Activated CD8-positive, alpha-beta T cell treated with anti-CD3 and anti-CD28 coated beads, Interleukin-2, amount 10 ng/mL, durations not matched to agents 7 days and 5 days (primary cell): ENCODE measurements at regions of chr4 and their contacts with region 1.

Region 1: GRCh38 chr4:2220016-2220630 is 21.8 kb downstream of the HAUS3 start:
- DNase-seq: peak; percentile 85
- ATAC-seq: peak; percentile 90
- H3K4me3 Mint-ChIP-seq: no peak overlapping the region
- H3K27ac Mint-ChIP-seq: no peak overlapping the region
- H3K4me1 Mint-ChIP-seq: peaks cover 12% of the 10 kb centered on the region
- H3K27me3 Mint-ChIP-seq: no peaks in the 10 kb centered on the region

Region 2: DNA sequence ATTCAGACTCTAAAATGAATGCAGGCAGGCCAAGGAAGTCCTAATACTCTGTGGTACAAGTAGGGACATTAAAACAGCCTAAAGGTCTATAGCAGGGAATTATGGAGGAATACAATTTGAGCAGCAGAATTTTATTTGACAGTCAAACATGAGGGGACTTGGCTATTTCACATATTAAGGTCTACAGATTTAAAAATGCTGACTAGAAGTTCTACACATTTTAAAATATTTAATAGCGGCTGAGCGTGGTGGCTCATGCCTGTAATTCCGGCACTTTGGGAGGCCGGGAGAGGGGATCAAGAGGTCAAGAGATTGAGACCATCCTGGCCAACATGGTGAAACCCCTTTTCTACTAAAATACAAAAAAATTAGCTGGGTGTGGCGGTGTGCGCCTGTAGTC is 11.0 kb after region 1 on chr4:
- CTCF ChIA-PET with region 1: interaction called, 24 read pairs
- POLR2A ChIA-PET with region 1: no interaction called
- DNase-seq: no peak
- ATAC-seq: no peak
- H3K4me3 Mint-ChIP-seq: no peak overlapping the region
- H3K27ac Mint-ChIP-seq: no peak overlapping the region
- H3K4me1 Mint-ChIP-seq: peaks cover 20% of the 10 kb centered on the region
- H3K27me3 Mint-ChIP-seq: no peaks in the 10 kb centered on the region

Region 3: DNA sequence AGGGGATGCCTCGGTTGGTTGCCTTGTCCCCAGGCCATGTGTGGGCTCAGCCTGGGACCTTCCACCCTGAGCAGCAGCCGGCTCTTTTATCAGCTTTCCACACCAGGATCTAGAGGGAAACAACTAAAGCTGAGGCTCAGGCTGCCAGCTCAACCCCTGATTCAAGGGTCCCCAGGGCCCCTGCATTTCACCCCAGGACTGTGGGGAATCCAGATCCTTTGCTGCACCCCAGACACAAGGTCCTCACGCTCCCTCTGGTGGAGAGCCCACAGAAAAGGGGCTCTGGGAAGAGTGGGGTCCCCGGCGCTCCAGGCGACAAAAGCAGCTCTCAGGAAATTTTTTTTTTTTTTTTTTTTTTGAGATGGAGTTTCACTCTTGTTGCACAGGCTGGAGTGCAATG is 134.0 kb after region 1 on chr4:
- CTCF ChIA-PET with region 1: interaction called, 10 read pairs
- POLR2A ChIA-PET with region 1: no interaction called
- DNase-seq: peak; percentile 42
- ATAC-seq: peak; percentile 56
- H3K4me3 Mint-ChIP-seq: no peak overlapping the region
- H3K27ac Mint-ChIP-seq: no peak overlapping the region
- H3K4me1 Mint-ChIP-seq: peaks cover 6% of the 10 kb centered on the region
- H3K27me3 Mint-ChIP-seq: no peaks in the 10 kb centered on the region

Region 4: GRCh38 chr4:2412885-2413716 is 193.0 kb after region 1 on chr4:
- CTCF ChIA-PET with region 1: interaction called, 11 read pairs
- POLR2A ChIA-PET with region 1: no interaction called
- DNase-seq: peak; percentile 95
- ATAC-seq: peak; percentile 87
- H3K4me3 Mint-ChIP-seq: peak overlapping the region; percentile 56
- H3K27ac Mint-ChIP-seq: peak overlapping the region; percentile 97
- H3K4me1 Mint-ChIP-seq: peaks cover 71% of the 10 kb centered on the region
- H3K27me3 Mint-ChIP-seq: peaks cover 29% of the 10 kb centered on the region

Region 5: GRCh38 chr4:2441393-2442174 is 221.5 kb after region 1 on chr4:
- CTCF ChIA-PET with region 1: interaction called, 23 read pairs
- POLR2A ChIA-PET with region 1: no interaction called
- DNase-seq: peak; percentile 85
- ATAC-seq: peak; percentile 97
- H3K4me3 Mint-ChIP-seq: no peak overlapping the region
- H3K27ac Mint-ChIP-seq: no peak overlapping the region
- H3K4me1 Mint-ChIP-seq: peaks cover 5% of the 10 kb centered on the region
- H3K27me3 Mint-ChIP-seq: no peaks in the 10 kb centered on the region

Region 6: DNA sequence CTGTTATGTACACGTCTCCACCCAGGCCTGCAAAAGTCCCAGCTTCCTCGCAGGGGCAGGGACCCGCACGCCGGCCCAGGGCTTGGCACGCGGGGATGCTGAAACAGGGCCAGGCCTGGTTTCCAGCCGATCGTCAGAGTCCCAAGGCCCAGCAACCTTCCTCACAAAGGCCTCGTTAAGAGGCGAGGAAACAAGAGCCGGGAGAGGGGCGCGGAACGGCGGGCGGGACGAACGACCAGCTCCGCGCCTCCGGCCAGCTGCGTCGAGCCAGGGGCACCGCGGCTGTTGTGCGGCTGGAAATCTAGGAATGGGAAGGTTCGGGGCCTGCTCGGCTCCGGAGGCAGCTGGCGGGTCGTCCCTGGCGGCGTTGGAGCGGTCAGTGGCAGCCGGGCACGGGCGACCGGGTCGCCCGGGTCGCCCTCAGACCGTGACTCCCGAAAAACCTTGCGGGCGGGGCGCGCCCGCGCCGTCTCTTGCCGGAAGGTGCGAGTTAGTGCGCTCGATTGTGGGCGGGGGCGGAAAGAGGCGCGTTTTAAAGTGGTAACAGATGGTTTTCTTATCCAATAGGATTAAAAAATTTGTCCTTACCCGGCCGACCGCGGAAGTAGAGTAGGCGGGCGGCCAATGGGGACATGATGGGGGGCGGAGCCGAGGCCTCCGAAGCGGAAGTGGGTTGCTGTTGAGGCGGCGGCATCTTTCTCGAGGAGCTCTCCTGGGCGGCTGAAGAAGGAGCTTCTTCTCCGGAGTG is 248.5 kb after region 1 on chr4 and contains the start of gene RNF4:
- CTCF ChIA-PET with region 1: interaction called, 14 read pairs
- POLR2A ChIA-PET with region 1: interaction called, 4 read pairs
- DNase-seq: peak; percentile 98
- ATAC-seq: peak; percentile 89
- H3K4me3 Mint-ChIP-seq: peak within 1 kb of the TSS; percentile 99
- H3K27ac Mint-ChIP-seq: peak within 1 kb of the TSS; percentile 99
- H3K4me1 Mint-ChIP-seq: peaks cover 43% of the 10 kb centered on the region
- H3K27me3 Mint-ChIP-seq: peaks cover 3% of the 10 kb centered on the region
- total RNA-seq, gene RNF4: 105 to 118 TPM